Activated CD4-positive, alpha-beta T cell treated with anti-CD3 and anti-CD28 coated beads, Interleukin-2, amount 10 ng/mL, durations not matched to agents 24 days and 14 days (primary cell): ENCODE measurements at regions of chr9 and their contacts with region 1.

Region 1: DNA sequence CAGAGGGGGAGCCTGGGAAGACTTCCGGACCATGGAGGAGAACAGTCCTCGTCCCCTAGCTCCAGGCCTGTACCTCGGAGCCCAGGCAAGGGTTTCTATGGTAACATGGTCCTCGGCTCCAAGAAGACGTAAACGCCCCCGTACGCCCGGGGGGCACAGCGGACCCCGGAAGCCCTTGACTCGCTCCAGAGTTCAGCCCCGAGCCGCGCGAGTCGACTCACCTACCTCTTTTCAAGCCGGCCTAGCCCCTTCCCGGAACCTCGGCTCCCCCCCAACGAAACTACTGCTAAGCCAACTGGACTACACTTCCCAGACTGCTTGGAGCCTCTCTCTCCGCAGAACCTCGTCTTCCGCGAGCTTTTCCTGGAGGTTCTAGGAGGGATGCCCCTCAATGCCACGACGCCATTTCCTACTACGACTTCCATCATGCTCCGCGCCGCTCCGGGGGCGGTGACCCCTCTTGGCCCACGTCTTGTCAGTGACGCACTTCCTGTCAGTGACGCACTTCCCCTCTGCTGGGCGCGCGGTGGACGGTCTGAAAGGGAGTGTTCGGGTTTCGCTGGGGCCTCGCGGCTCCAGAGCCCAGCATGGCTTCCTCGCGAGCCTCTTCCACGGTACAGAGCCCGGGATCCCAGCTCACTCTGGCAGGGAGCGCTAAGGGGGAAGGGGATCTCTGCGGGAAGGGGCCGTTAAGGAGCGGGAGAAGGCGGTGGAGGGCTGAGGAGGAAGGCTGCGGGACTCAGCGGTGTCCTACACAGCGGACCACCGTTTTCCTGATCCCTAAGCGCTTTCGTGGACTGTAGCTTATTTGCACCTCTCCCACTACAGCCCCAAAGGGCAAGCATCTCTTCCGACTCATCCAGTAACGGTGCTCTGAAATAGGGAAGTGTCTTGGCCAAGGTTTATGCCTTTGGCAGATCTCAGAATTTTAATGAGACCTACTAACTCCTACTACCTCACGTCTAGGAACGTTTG is at the starts of genes CDC26 and PRPF4:
- DNase-seq: peak; percentile 99
- H3K4me3 Mint-ChIP-seq: no peak within 1 kb of the TSS
- H3K27ac Mint-ChIP-seq: no peak within 1 kb of the TSS
- H3K4me1 Mint-ChIP-seq: peaks cover 28% of the 10 kb centered on the region
- H3K27me3 Mint-ChIP-seq: no peaks in the 10 kb centered on the region
- total RNA-seq, gene CDC26: 52.0 and 57.4 TPM in 2 replicates
- total RNA-seq, gene PRPF4: 63.6 and 64.6 TPM in 2 replicates

Region 2: DNA sequence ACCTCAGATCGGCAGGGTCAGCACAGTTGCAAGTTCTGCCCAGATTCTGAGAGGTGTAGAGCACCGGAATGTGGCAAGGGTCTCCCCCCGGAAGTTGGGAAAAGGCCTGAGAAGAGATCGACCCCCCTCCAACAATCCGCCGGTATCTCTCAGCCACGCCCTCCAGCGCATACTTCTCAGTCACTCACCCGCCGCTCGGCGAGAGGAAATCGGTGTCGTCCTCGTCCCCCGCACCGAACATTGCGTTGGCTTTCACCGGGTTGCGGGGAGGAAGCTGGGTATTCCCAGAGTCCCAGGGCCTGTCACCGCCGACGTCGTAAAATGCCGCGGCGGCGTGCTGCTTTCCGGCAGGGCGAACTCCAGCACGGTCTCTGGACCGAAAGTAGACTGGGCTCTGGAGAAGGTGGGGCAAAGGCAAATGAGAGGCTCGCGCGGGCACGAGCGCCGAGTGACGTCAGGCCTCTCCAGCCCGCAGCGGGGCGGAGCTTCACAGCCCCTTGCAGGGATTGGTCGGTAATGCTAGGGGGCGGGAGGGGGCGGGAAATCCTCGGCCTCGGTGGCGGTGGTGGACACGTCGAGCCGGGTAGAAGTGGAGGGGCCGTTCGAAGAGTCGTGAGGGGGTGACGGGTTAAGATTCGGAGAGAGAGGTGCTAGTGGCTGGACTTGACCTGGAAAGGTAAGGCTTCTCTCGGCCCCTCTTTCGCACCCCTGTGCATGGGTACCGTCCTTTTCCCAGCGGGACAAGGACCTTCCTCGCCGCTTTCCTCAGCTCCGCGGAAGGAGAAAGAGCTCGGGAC is 54.2 kb before region 1 on chr9 and contains the starts of genes FKBP15 and SLC31A1:
- intact Hi-C with region 1: loop called (anchors 1 kb)
- DNase-seq: peak; percentile 99
- H3K4me3 Mint-ChIP-seq: peak within 1 kb of the TSS; percentile 94
- H3K27ac Mint-ChIP-seq: peak within 1 kb of the TSS; percentile 94
- H3K4me1 Mint-ChIP-seq: peaks cover 53% of the 10 kb centered on the region
- H3K27me3 Mint-ChIP-seq: no peaks in the 10 kb centered on the region
- total RNA-seq, gene FKBP15: 33.9 and 36.7 TPM in 2 replicates
- total RNA-seq, gene SLC31A1: 18.6 and 20.0 TPM in 2 replicates

Region 3: DNA sequence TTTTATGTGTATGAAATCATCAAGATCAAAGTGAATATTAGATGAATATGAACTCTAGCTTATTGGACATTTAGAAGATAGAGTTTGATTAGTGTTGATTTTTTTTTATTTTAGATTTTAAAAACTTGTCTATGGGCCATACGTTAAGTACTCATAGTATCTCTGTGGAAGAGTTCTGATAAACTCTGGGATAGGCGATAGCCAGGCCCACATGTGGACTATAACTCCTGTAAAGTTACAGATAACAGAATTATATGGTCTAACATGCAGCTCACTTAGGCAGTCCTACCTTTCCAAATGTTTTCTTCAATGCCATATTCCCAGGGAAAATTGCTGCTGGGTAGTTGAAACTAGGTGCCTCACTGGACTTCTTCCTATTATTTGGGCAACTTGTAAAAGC is 43.7 kb before region 1 on chr9:
- intact Hi-C with region 1: no loop called
- DNase-seq: no peak
- H3K4me3 Mint-ChIP-seq: no peak overlapping the region
- H3K27ac Mint-ChIP-seq: no peak overlapping the region
- H3K4me1 Mint-ChIP-seq: peaks cover 21% of the 10 kb centered on the region
- H3K27me3 Mint-ChIP-seq: no peaks in the 10 kb centered on the region

Region 4: GRCh38 chr9:113349445-113350094 is 74.1 kb after region 1 on chr9 and contains the start of gene BSPRY:
- intact Hi-C with region 1: loop called (anchors 2 kb)
- DNase-seq: peak; percentile 87
- H3K4me3 Mint-ChIP-seq: peak within 1 kb of the TSS; percentile 89
- H3K27ac Mint-ChIP-seq: peak within 1 kb of the TSS; percentile 90
- H3K4me1 Mint-ChIP-seq: peaks cover 56% of the 10 kb centered on the region
- H3K27me3 Mint-ChIP-seq: no peaks in the 10 kb centered on the region
- total RNA-seq, gene BSPRY: 10.5 and 10.6 TPM in 2 replicates

Region 5: GRCh38 chr9:113401027-113401792 is 125.8 kb after region 1 on chr9 and contains the start of gene ALAD:
- intact Hi-C with region 1: loop called (anchors 1 kb)
- DNase-seq: peak; percentile 100
- H3K4me3 Mint-ChIP-seq: peak within 1 kb of the TSS; percentile 96
- H3K27ac Mint-ChIP-seq: peak within 1 kb of the TSS; percentile 90
- H3K4me1 Mint-ChIP-seq: peaks cover 23% of the 10 kb centered on the region
- H3K27me3 Mint-ChIP-seq: no peaks in the 10 kb centered on the region
- total RNA-seq, gene ALAD: 23.5 and 24.9 TPM in 2 replicates

Region 6: DNA sequence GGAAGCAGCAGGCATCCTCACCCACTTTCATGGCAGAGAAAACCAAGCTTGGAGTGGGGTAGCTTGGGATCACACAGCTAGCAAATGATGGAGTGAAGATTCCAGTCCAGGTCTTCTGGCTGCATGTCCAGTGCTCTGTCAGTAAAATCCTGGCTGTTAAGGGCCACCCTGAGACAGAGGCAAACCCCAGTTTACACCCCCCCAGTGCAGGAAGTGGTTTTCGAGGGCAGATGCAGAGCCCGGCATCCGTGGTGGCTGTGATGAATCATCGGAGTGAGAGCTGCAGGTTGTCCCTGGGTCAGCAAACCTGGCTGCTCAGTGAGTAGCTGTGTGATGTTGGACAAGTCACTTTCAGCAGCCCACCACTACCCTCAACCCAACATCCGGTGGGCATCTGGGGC is 303.4 kb after region 1 on chr9:
- intact Hi-C with region 1: loop called (anchors 1 kb)
- DNase-seq: peak; percentile 96
- H3K4me3 Mint-ChIP-seq: peak overlapping the region; percentile 80
- H3K27ac Mint-ChIP-seq: peak overlapping the region; percentile 93
- H3K4me1 Mint-ChIP-seq: peaks cover 77% of the 10 kb centered on the region
- H3K27me3 Mint-ChIP-seq: no peaks in the 10 kb centered on the region